ENCODE measurements at regions of chr10 and their contacts with region 1.

Region 1: DNA sequence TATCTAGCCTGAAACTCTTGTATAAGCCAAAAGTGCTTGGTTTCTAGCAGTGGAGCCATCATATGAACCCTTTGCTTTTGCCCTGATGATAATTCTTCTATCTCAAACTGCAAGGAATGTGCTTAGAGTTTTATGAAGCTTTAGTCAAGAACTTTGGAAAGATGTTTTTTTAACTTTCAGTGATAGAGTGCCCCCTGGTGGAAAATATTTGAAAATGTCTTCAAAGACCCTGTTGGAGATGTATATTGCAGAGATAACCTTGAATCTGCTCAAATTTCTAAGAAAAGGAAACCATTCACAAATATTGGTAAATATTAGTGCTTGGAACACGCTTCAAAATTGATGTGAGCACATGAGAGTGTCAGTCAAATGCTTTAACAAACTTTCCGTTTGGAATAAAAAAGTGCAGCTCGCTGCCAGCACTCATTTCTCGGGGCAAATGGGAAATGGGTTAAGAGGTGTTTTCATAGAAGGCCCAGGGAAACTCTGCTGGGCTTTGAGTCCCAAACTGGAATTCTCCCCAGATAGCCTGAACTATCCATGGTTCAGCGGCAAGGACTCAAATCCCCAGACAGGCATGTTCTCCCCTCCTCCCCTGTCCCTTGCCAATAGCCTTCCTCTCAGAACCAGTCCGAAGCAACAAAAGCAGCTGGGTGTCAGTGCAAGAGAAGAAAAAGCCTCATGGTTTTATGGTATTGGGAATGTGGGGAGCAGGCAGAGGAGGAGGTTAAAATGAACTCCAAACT is 129.3 kb downstream of the MYOF start:
- DNase-seq: no peak
- ATAC-seq: peak; percentile 70
- H3K4me3 Mint-ChIP-seq: no peak overlapping the region
- H3K27ac Mint-ChIP-seq: no peak overlapping the region
- H3K4me1 Mint-ChIP-seq: peaks cover 15% of the 10 kb centered on the region
- H3K27me3 Mint-ChIP-seq: no peaks in the 10 kb centered on the region; the same call in 1 of the 2 replicates
- CTCF ChIP-seq: peak; percentile 54

Region 2: DNA sequence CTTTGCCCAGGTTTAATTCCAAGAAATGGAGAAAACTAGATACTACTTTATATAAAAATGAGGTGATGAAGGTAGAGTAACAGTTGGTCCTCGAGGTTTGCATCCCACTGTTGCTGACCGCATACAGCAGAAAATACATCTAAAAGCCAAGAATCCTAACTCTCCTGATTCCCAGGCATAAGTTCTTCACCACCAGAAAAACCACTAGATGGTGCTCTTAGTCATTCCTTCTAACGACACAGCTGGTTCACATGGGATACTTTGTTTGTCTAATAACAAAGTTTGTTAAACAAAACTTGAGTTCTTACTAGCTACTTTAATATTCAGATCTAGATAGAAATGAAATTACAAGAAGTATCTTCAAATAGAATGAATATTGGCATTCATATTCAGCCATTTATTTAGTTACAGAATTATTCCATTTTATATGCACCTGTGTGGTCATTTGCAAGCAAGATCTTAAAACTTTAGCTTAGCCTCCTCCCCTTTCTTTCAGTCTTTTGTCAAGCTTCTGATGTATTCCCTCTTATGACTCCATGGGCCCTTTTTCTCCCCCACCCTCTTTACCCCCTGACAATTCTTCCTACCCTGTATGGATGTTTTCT is 346.3 kb before region 1 on chr10:
- CTCF ChIA-PET with region 1: interaction called, 11 read pairs
- POLR2A ChIA-PET with region 1: no interaction called
- DNase-seq: no peak
- ATAC-seq: peak; percentile 78
- H3K4me3 Mint-ChIP-seq: no peak overlapping the region
- H3K27ac Mint-ChIP-seq: no peak overlapping the region
- H3K4me1 Mint-ChIP-seq: no peaks in the 10 kb centered on the region
- H3K27me3 Mint-ChIP-seq: no peaks in the 10 kb centered on the region
- CTCF ChIP-seq: no peak

Region 3: DNA sequence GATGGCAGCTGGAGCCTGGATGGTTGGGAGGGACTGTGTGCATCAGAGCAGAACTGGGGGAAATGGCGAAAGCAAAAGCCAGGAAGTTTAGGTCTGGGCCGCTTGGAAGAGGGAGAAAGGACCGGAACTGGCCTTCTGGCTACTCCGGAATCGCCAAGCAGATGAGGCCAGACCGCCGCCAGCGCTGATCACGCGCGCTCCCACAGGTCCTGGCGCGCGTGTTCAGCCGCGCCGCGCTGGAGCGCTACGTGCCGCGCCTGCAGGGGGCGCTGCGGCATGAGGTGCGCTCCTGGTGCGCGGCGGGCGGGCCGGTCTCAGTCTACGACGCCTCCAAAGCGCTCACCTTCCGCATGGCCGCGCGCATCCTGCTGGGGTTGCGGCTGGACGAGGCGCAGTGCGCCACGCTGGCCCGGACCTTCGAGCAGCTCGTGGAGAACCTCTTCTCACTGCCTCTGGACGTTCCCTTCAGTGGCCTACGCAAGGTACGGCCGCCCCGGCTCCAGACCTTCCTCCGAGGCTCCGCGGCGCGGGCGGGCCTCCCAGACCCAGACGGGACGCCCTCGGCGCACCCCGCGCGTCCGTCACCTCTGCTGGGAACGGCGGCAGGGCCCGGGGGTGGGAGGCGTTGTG is 290.2 kb before region 1 on chr10:
- CTCF ChIA-PET with region 1: interaction called, 12 read pairs
- POLR2A ChIA-PET with region 1: no interaction called
- DNase-seq: peak; percentile 70
- ATAC-seq: peak; percentile 31
- H3K4me3 Mint-ChIP-seq: peak overlapping the region; percentile 67
- H3K27ac Mint-ChIP-seq: no peak overlapping the region
- H3K4me1 Mint-ChIP-seq: peaks cover 43% of the 10 kb centered on the region
- H3K27me3 Mint-ChIP-seq: peaks cover 99% of the 10 kb centered on the region
- CTCF ChIP-seq: peak; percentile 86

Region 4: DNA sequence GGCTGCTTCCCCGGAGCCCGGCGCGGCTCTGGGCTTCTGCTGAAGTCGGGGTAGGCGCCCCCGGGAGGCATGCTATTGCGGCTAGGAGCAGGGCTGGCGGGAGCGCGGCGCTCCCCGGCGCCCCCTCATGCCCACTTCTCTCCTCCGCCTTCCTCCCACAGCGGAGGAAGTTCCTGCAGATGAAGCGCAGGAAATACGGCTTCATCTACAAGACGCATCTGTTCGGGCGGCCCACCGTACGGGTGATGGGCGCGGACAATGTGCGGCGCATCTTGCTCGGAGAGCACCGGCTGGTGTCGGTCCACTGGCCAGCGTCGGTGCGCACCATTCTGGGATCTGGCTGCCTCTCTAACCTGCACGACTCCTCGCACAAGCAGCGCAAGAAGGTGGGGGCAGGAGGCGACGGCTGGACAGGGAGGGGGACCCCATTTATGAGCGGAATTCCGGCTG is 278.6 kb before region 1 on chr10:
- CTCF ChIA-PET with region 1: interaction called, 43 read pairs
- POLR2A ChIA-PET with region 1: no interaction called
- DNase-seq: peak; percentile 65
- ATAC-seq: peak; percentile 23
- H3K4me3 Mint-ChIP-seq: peak overlapping the region; percentile 89
- H3K27ac Mint-ChIP-seq: no peak overlapping the region
- H3K4me1 Mint-ChIP-seq: peaks cover 43% of the 10 kb centered on the region
- H3K27me3 Mint-ChIP-seq: peaks cover 92% of the 10 kb centered on the region
- CTCF ChIP-seq: no peak

Region 5: GRCh38 chr10:93403152-93404041 is 50.6 kb after region 1 on chr10:
- CTCF ChIA-PET with region 1: no interaction called
- POLR2A ChIA-PET with region 1: no interaction called
- DNase-seq: no peak
- ATAC-seq: no peak
- H3K4me3 Mint-ChIP-seq: no peak overlapping the region
- H3K27ac Mint-ChIP-seq: no peak overlapping the region
- H3K4me1 Mint-ChIP-seq: peaks cover 11% of the 10 kb centered on the region
- H3K27me3 Mint-ChIP-seq: no peaks in the 10 kb centered on the region
- CTCF ChIP-seq: no peak

Region 6: GRCh38 chr10:93422151-93422550 is 69.3 kb after region 1 on chr10:
- CTCF ChIA-PET with region 1: no interaction called
- POLR2A ChIA-PET with region 1: no interaction called
- DNase-seq: no peak
- ATAC-seq: no peak
- H3K4me3 Mint-ChIP-seq: no peak overlapping the region
- H3K27ac Mint-ChIP-seq: peak overlapping the region; percentile 34; the same call in 1 of the 2 replicates
- H3K4me1 Mint-ChIP-seq: peaks cover 33% of the 10 kb centered on the region
- H3K27me3 Mint-ChIP-seq: no peaks in the 10 kb centered on the region
- CTCF ChIP-seq: no peak